H1 (cell line): ENCODE measurements at regions of chr22 and their contacts with region 1.

Region 1: GRCh38 chr22:37855462-37855861 is 6.2 kb downstream of the EIF3L start:
- DNase-seq: no peak
- H3K4me3 ChIP-seq: no peak overlapping the region
- H3K27ac ChIP-seq: no peak overlapping the region
- H3K4me1 ChIP-seq: no peaks in the 10 kb centered on the region
- H3K27me3 ChIP-seq: no peaks in the 10 kb centered on the region
- CTCF ChIP-seq: no peak
- EP300 ChIP-seq: no peak
- POLR2A ChIP-seq: no peak
- RAD21 ChIP-seq: no peak

Region 2: DNA sequence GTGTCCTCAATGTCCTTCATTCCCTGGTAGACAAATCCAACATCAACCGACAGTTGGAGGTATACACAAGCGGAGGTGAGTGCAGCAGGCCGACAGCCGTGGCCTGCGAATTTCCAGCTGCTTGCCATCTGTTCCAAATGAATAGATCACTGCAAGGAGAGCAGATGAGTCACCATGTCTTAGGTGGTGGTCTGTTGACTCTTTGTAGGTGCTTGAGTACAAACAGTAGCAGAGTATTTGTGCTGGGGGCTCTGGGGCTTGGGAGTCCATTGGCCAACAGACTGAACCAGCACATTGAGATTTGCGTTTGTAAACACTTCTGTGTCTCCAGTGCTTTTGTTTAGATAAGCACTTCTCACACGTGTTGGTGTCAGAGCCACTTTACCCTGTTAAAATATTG is 14.8 kb after region 1 on chr22:
- CTCF ChIA-PET with region 1: interaction called, 4 read pairs
- POLR2A ChIA-PET with region 1: interaction called, 86 read pairs
- DNase-seq: no peak
- H3K4me3 ChIP-seq: no peak overlapping the region
- H3K27ac ChIP-seq: no peak overlapping the region
- H3K4me1 ChIP-seq: no peaks in the 10 kb centered on the region
- H3K27me3 ChIP-seq: no peaks in the 10 kb centered on the region
- CTCF ChIP-seq: no peak
- EP300 ChIP-seq: no peak
- POLR2A ChIP-seq: no peak
- RAD21 ChIP-seq: no peak